ENCODE measurements at regions of chrX and their contacts with region 1.

Region 1: GRCh38 chrX:47384502-47384901 is 14.1 kb downstream of the ZNF157 start:
- DNase-seq: peak in 1 of 2 experiments; percentile 58
- H3K4me3 ChIP-seq: no peak overlapping the region
- H3K27ac ChIP-seq: no peak overlapping the region
- H3K4me1 ChIP-seq: peaks cover 0 to 11% (median 3%) of the 10 kb centered on the region in 4 experiments; a peak in 3 of 7 replicates
- H3K27me3 ChIP-seq: no peaks in the 10 kb centered on the region
- CTCF ChIP-seq: peak; percentile 22 to 67 (median 58)
- EP300 ChIP-seq: no peak
- POLR2A ChIP-seq: no peak
- RAD21 ChIP-seq: peak; percentile 76 to 86

Region 2: GRCh38 chrX:47327902-47328301 is 56.6 kb before region 1 on chrX:
- CTCF ChIA-PET with region 1: no interaction called
- POLR2A ChIA-PET with region 1: no interaction called
- DNase-seq: no peak
- H3K4me3 ChIP-seq: no peak overlapping the region
- H3K27ac ChIP-seq: no peak overlapping the region
- H3K4me1 ChIP-seq: no peaks in the 10 kb centered on the region
- H3K27me3 ChIP-seq: no peaks in the 10 kb centered on the region
- CTCF ChIP-seq: no peak
- EP300 ChIP-seq: no peak
- POLR2A ChIP-seq: no peak
- RAD21 ChIP-seq: no peak

Region 3: GRCh38 chrX:47370278-47370677 is 14.2 kb before region 1 on chrX and contains the start of gene ZNF157:
- CTCF ChIA-PET with region 1: interaction called, 14 read pairs
- POLR2A ChIA-PET with region 1: interaction called, 4 read pairs
- DNase-seq: no peak
- H3K4me3 ChIP-seq: no peak within 1 kb of the TSS
- H3K27ac ChIP-seq: no peak within 1 kb of the TSS
- H3K4me1 ChIP-seq: no peaks in the 10 kb centered on the region
- H3K27me3 ChIP-seq: no peaks in the 10 kb centered on the region
- CTCF ChIP-seq: no peak
- EP300 ChIP-seq: no peak
- POLR2A ChIP-seq: no peak
- RAD21 ChIP-seq: no peak
- total RNA-seq, gene ZNF157: 2.0 and 2.2 TPM in 2 replicates

Region 4: DNA sequence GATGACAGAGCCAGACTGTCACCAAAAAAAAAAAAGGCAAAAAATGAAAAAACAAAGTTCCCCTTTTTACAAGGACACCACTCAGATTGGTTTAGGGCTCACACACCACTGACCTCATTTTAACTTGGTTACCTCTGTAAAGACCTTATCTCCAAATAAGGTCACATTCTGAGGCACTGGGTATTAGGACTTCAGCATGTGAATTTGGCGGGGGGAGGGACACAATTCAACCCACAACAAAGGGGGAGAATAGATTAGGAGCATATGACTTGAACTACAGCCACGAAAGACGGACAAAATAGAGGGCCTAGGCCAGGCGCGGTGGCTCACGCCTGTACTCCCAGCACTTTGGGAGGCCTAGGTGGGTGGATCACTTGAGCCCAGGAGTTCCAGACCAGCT is 145.5 kb after region 1 on chrX:
- CTCF ChIA-PET with region 1: no interaction called
- POLR2A ChIA-PET with region 1: no interaction called
- DNase-seq: no peak
- H3K4me3 ChIP-seq: no peak overlapping the region
- H3K27ac ChIP-seq: no peak overlapping the region
- H3K4me1 ChIP-seq: no peaks in the 10 kb centered on the region
- H3K27me3 ChIP-seq: no peaks in the 10 kb centered on the region
- CTCF ChIP-seq: no peak
- EP300 ChIP-seq: no peak
- POLR2A ChIP-seq: no peak
- RAD21 ChIP-seq: no peak

Region 5: DNA sequence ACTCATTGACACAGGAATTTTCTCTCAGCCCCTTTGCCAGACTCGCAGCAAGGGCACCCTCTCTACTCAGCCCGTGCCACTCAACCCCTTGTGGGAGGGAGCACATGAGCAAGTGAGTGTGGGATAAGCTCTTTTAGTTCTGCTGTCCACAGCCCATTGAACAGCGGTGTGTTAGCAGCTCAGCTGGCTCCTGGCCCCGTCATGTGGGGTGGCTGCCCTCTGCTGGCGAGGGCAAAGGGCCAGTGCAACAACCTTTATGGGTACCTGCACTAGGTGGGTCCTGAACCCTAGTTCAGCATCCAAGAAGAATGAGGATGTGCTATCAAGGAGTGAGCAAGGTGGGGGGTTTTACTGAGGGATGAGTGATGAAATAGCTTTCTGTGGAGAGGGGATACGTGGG is 367.2 kb after region 1 on chrX:
- CTCF ChIA-PET with region 1: no interaction called
- POLR2A ChIA-PET with region 1: no interaction called
- DNase-seq: peak in 1 of 2 experiments; percentile 56
- H3K4me3 ChIP-seq: no peak overlapping the region
- H3K27ac ChIP-seq: no peak overlapping the region
- H3K4me1 ChIP-seq: no peaks in the 10 kb centered on the region
- H3K27me3 ChIP-seq: no peaks in the 10 kb centered on the region
- CTCF ChIP-seq: peak; percentile 74 to 80 (median 78)
- EP300 ChIP-seq: no peak
- POLR2A ChIP-seq: no peak
- RAD21 ChIP-seq: peak; percentile 77 to 87